ENCODE measurements at regions of chr19 and their contacts with region 1.

Region 1: DNA sequence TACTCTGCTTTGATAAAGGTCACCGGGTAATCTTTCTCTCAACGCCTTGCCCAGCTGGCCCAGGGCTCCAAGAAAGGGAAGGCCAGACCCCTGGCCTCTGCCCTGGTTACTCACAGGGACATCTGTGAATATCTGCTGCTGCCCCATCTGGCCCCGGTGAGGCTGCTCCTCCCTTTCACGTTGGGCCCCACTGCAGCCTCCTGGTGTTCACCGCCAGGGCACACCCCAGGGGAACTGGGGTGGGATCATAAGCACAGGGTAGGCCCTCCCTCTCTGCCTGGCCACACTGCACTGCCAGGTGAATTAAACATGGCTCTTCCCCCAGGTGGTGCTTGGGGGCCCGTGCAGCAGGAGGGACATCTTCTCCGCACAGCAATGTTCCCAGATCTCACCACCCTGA is 12.7 kb downstream of the LAIR1 start:
- H3K4me3 Mint-ChIP-seq: no peak overlapping the region
- H3K27ac Mint-ChIP-seq: peak overlapping the region; percentile 58
- H3K4me1 Mint-ChIP-seq: peaks cover 64% of the 10 kb centered on the region
- H3K27me3 Mint-ChIP-seq: peaks cover 28% of the 10 kb centered on the region

Region 2: DNA sequence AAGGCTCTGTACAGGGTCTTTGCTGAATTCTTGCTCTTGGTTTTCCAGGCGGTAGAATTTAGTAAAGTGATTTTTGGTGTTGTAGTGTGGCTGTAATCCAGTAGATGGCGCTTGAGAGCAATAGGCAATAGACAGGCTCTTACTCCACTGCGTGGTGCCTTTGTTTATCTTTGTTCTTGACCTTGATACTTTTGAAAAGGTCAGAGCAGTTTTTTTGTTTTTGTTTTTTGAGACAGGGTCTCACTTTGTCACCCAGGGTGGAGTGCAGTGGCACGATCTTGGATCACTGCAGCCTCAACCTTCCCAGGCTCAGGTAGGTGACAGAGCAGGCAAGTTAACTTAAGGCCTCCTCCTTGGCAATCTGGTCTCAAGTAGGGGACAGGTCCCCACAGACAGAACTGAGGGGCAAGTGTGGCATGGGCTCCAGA is 26.8 kb before region 1 on chr19:
- intact Hi-C with region 1: loop called (anchors 2 kb)
- H3K4me3 Mint-ChIP-seq: no peak overlapping the region
- H3K27ac Mint-ChIP-seq: peak overlapping the region; percentile 67
- H3K4me1 Mint-ChIP-seq: peaks cover 41% of the 10 kb centered on the region
- H3K27me3 Mint-ChIP-seq: peaks cover 11% of the 10 kb centered on the region

Region 3: DNA sequence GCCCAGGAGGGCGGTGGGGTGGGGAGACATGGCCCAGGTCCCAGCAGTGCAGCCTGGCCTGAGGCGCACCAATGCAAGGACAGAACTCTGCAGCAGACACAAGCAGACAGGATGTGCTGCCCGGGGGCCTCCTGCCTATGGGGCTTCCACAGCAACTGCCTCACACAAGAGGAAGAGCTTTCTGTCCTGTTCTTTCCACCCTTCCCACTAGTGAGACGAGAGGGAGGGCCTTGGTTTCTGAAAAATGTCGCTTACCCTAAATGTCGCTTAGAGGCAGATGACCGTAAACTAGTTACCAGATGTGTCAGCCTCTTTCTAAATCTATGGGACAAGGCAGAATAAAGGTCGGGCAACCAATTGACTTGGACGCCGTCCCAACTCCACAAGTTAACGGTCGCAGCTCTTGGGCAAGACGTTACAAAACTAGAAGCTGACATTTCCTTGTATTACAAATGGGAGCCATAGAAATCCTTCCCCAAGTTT is 12.8 kb after region 1 on chr19 and contains the start of gene LAIR1:
- intact Hi-C with region 1: no loop called
- H3K4me3 Mint-ChIP-seq: peak within 1 kb of the TSS; percentile 96
- H3K27ac Mint-ChIP-seq: peak within 1 kb of the TSS; percentile 97
- H3K4me1 Mint-ChIP-seq: peaks cover 61% of the 10 kb centered on the region
- H3K27me3 Mint-ChIP-seq: peaks cover 6% of the 10 kb centered on the region

Region 4: GRCh38 chr19:54383330-54383729 is 31.3 kb after region 1 on chr19:
- intact Hi-C with region 1: no loop called
- H3K4me3 Mint-ChIP-seq: peak overlapping the region; percentile 34
- H3K27ac Mint-ChIP-seq: peak overlapping the region; percentile 95
- H3K4me1 Mint-ChIP-seq: peaks cover 64% of the 10 kb centered on the region
- H3K27me3 Mint-ChIP-seq: peaks cover 11% of the 10 kb centered on the region